AG04450 (cell line): ENCODE measurements at regions of chr19 and their contacts with region 1.

Region 1: DNA sequence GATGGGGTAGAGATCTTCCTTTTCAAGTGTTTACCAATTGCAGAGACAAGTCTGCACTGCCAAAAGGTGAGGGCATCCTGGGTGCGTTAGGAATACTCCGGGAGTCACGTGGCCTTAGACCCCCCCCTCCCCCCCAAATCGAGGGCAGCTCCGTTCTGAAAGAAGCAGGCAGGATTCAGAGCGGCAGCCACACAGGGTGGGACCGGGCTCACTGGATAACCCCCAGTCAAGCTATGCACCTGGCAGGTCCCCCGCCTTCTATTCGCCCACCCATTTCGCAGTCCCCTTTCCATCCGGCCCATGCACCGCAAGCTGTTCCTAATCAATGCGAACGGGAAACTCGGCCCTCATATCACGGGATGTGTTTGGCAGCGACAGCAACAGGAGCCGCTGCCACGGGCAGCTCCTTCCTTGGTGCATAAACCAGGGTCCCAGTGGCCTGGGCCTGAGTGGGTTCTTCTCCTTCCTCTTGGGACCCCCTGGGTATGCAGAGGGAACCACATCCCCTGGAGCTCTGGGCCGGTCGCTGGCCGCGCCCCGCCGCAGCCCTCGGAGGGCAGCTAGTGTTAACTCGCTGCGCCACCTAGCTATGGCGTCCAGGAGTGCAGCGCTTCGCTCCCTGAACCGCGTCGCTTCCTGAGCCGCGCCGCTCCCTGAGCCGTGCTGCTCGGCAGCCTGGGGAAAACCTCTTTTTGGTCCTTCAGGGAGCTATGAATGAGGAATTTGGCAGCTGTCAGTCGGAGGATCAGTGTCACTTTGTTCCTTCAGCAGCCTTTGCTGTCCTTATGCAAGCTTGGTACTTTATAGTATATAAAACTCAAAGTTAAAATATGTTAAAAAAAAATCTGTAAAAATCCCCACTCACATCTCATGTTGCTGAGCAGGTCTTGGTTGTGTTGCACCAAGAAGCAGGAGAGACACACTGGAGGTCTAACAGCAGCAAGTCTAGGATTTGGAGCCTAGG is 41.4 kb downstream of the LYL1 start:
- DNase-seq: no peak
- H3K4me3 ChIP-seq: peak overlapping the region; percentile 36
- H3K27ac ChIP-seq: peak overlapping the region; percentile 61
- H3K27me3 ChIP-seq: no peaks in the 10 kb centered on the region
- CTCF ChIP-seq: peak; percentile 97

Region 2: DNA sequence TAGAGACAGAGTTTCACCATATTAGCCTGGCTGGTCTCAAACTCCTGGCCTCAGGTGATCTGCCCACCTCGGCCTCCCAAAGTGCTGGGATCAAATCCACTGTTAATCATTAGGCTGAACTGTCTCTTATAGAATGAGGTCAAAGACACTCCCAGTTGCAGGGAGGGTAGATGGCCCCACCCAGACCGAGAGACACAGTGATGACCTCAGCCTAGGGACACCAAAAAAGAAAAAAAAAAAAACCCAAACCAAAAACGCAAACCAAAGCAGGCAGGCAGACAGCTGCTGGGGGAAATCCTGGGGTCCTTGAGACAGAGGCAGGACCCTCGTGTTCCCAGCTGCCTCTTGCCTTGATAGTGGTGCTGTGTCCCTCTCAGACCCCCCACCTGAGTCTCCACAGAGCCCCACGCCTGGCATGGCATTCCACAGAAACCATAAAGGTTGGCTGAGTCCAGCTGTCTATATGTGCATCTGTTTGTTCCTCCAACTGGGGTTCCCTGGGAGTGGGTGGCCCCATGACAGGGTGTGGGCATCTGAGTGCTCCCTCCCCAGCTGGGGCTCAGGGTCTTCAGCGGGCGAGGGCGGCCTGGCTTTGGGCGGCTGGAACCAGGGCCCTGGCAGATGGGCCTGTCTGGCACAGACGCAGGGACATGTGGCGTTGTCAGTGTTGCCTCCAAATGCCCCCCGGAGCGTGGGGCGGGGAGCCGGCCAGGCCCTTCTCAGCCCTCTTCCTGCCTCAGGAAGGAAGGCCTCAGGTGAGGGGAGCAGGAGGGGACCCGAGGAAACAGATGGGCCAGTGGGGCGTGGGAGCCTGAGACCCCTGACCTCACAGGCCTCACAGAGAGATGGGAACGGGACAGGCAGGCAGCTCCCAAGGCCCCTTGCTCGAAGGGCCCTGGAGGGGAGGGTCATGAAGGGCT is 86.7 kb before region 1 on chr19:
- CTCF ChIA-PET with region 1: interaction called, 86 read pairs
- POLR2A ChIA-PET with region 1: no interaction called
- DNase-seq: no peak
- H3K4me3 ChIP-seq: no peak overlapping the region
- H3K27ac ChIP-seq: no peak overlapping the region
- H3K27me3 ChIP-seq: no peaks in the 10 kb centered on the region
- CTCF ChIP-seq: no peak

Region 3: GRCh38 chr19:12994701-12995595 is 66.3 kb before region 1 on chr19 and contains the start of gene NFIX:
- CTCF ChIA-PET with region 1: interaction called, 10 read pairs
- POLR2A ChIA-PET with region 1: no interaction called
- DNase-seq: no peak
- H3K4me3 ChIP-seq: peak within 1 kb of the TSS; percentile 89
- H3K27ac ChIP-seq: no peak within 1 kb of the TSS
- H3K27me3 ChIP-seq: no peaks in the 10 kb centered on the region
- CTCF ChIP-seq: no peak
- polyA plus RNA-seq, gene NFIX: 15.1 and 22.3 TPM in 2 replicates

Region 4: GRCh38 chr19:13012690-13013608 is 48.3 kb before region 1 on chr19:
- CTCF ChIA-PET with region 1: interaction called, 32 read pairs
- POLR2A ChIA-PET with region 1: interaction called, 4 read pairs
- DNase-seq: no peak
- H3K4me3 ChIP-seq: peak overlapping the region; percentile 52
- H3K27ac ChIP-seq: peak overlapping the region; percentile 93
- H3K27me3 ChIP-seq: no peaks in the 10 kb centered on the region
- CTCF ChIP-seq: no peak

Region 5: GRCh38 chr19:13033819-13034611 is 27.2 kb before region 1 on chr19:
- CTCF ChIA-PET with region 1: interaction called, 68 read pairs
- POLR2A ChIA-PET with region 1: interaction called, 5 read pairs
- DNase-seq: no peak
- H3K4me3 ChIP-seq: no peak overlapping the region
- H3K27ac ChIP-seq: peak overlapping the region; percentile 21
- H3K27me3 ChIP-seq: no peaks in the 10 kb centered on the region
- CTCF ChIP-seq: peak; percentile 78

Region 6: DNA sequence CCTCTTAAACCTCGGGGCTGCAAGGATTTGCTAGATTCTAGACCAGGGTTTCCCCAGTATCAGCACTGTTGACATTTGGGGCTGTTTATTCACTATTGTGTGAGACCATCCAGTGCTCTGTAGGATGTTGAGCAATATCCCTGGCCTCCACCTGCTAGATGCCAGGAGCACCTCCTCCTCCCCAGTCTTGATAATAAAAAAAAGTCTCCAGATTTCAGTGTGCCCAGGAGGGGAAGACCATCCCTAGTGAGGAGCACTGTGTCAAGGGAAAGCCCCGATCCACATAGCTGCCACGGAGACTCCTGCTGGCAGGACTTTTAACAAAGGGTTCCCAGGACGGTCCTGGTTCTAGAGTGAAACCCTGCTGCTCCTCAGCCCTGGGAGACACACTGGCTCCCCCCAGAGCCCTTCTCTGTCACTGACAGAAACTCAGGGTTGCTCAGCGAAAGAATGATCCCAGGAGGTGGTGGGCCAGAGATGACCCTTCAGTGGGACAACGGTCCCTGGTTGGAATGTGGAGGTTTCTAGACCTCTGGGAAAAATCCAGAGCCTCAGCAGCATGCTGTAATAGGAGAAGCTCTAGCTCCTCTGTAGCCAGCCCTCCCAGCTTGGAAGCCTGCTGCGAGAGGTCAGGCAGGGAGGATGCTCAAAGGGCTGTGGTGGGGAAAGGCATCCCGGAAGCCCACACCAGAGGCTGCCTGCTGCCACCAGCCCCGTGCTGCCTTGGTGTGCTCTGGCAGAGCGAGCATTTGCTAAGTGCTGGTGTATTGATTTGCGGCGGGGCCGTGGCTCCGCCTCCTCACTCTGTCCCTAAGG is 21.2 kb after region 1 on chr19:
- CTCF ChIA-PET with region 1: interaction called, 30 read pairs
- POLR2A ChIA-PET with region 1: interaction called, 3 read pairs
- DNase-seq: no peak
- H3K4me3 ChIP-seq: no peak overlapping the region
- H3K27ac ChIP-seq: peak overlapping the region; percentile 31
- H3K27me3 ChIP-seq: no peaks in the 10 kb centered on the region
- CTCF ChIP-seq: peak; percentile 34; the same call in 1 of the 2 replicates

Region 7: GRCh38 chr19:13132471-13133180 is 71.4 kb after region 1 on chr19:
- CTCF ChIA-PET with region 1: no interaction called
- POLR2A ChIA-PET with region 1: no interaction called
- DNase-seq: no peak
- H3K4me3 ChIP-seq: no peak overlapping the region
- H3K27ac ChIP-seq: peak overlapping the region; percentile 47
- H3K27me3 ChIP-seq: no peaks in the 10 kb centered on the region
- CTCF ChIP-seq: no peak